CD4-positive, alpha-beta memory T cell (primary cell): ENCODE measurements at regions of chr5 and their contacts with region 1.

Region 1: GRCh38 chr5:40404613-40405012 is 275.1 kb upstream of the PTGER4 start:
- DNase-seq: peak; percentile 50 to 68 (median 58)
- H3K4me3 ChIP-seq: no peak overlapping the region
- H3K4me3 Mint-ChIP-seq: peak overlapping the region; percentile 4 to 71 (median 37)
- H3K27ac ChIP-seq: peak overlapping the region; percentile 86
- H3K27ac Mint-ChIP-seq: peak overlapping the region; percentile 85 to 100 (median 99)
- H3K4me1 ChIP-seq: peaks cover 71% of the 10 kb centered on the region
- H3K4me1 Mint-ChIP-seq: peaks cover 49 to 90% (median 72%) of the 10 kb centered on the region in 4 donors
- H3K27me3 ChIP-seq: no peaks in the 10 kb centered on the region
- H3K27me3 Mint-ChIP-seq: no peaks in the 10 kb centered on the region

Region 2: DNA sequence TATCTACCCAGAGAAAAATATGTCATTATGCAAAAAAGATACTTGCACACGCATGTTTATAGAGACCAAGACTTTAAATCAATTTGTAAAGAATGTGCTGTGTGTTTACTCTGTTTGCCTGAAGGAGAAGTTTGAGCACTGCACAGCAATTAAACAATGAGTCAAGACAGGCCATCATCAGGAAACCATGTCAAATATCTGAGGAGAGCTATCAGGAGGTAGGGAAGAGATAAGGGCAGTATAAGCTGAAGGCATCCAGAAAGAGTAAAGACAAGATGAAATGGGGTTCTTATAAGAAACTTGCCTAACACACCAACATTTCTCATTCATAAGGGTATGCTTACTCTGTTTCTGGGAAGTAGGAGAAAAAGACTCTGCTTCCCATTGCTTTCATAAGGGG is 130.7 kb before region 1 on chr5:
- CTCF ChIA-PET with region 1: no interaction called
- POLR2A ChIA-PET with region 1: no interaction called
- intact Hi-C with region 1: no loop called
- DNase-seq: no peak
- H3K4me3 ChIP-seq: no peak overlapping the region
- H3K4me3 Mint-ChIP-seq: no peak overlapping the region
- H3K27ac ChIP-seq: no peak overlapping the region
- H3K27ac Mint-ChIP-seq: no peak overlapping the region
- H3K4me1 ChIP-seq: peaks cover 28% of the 10 kb centered on the region
- H3K4me1 Mint-ChIP-seq: peaks cover 22 to 38% (median 34%) of the 10 kb centered on the region in 4 donors
- H3K27me3 ChIP-seq: no peaks in the 10 kb centered on the region
- H3K27me3 Mint-ChIP-seq: no peaks in the 10 kb centered on the region

Region 3: GRCh38 chr5:40378396-40379177 is 26.0 kb before region 1 on chr5:
- CTCF ChIA-PET with region 1: interaction called, 3 read pairs
- POLR2A ChIA-PET with region 1: interaction called, 42 read pairs
- intact Hi-C with region 1: loop called (anchors 5 kb)
- DNase-seq: peak in 4 of 5 donors; percentile 40 to 51 (median 48)
- H3K4me3 ChIP-seq: no peak overlapping the region
- H3K4me3 Mint-ChIP-seq: peak overlapping the region in 7 of 8 donors; percentile 19 to 75 (median 53)
- H3K27ac ChIP-seq: peak overlapping the region; percentile 18
- H3K27ac Mint-ChIP-seq: peak overlapping the region; percentile 77 to 96 (median 88)
- H3K4me1 ChIP-seq: peaks cover 45% of the 10 kb centered on the region
- H3K4me1 Mint-ChIP-seq: peaks cover 35 to 57% (median 43%) of the 10 kb centered on the region in 4 donors
- H3K27me3 ChIP-seq: no peaks in the 10 kb centered on the region
- H3K27me3 Mint-ChIP-seq: no peaks in the 10 kb centered on the region

Region 4: GRCh38 chr5:40386289-40386688 is 18.3 kb before region 1 on chr5:
- CTCF ChIA-PET with region 1: interaction called, 22 read pairs
- POLR2A ChIA-PET with region 1: interaction called, 121 read pairs
- intact Hi-C with region 1: no loop called
- DNase-seq: peak in 4 of 5 donors; percentile 55 to 68 (median 57)
- H3K4me3 ChIP-seq: no peak overlapping the region
- H3K4me3 Mint-ChIP-seq: peak overlapping the region in 6 of 8 donors; percentile 9 to 76 (median 51)
- H3K27ac ChIP-seq: peak overlapping the region; percentile 28
- H3K27ac Mint-ChIP-seq: peak overlapping the region; percentile 70 to 96 (median 84)
- H3K4me1 ChIP-seq: peaks cover 91% of the 10 kb centered on the region
- H3K4me1 Mint-ChIP-seq: peaks cover 75 to 93% (median 82%) of the 10 kb centered on the region in 4 donors
- H3K27me3 ChIP-seq: no peaks in the 10 kb centered on the region
- H3K27me3 Mint-ChIP-seq: no peaks in the 10 kb centered on the region

Region 5: DNA sequence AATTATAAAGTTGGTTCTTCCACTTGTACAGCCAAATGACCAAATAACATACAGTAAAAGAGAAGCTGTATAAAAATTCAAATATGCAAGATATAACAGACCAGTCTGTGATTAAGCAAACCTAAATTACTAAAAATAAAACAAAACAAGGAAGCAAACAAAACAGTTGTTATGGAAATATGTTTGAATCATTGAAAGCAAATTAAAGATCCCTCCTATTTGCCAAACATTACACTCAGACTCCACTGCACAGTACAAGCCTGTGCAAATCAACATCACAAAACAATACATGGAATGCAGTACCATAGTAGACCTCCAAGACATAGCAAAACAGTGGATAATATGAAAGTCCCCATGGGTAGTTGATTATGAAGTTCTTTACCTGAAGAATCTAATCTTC is 13.0 kb before region 1 on chr5:
- CTCF ChIA-PET with region 1: interaction called, 22 read pairs
- POLR2A ChIA-PET with region 1: interaction called, 121 read pairs
- intact Hi-C with region 1: no loop called
- DNase-seq: no peak
- H3K4me3 ChIP-seq: no peak overlapping the region
- H3K4me3 Mint-ChIP-seq: peak overlapping the region in 1 of 8 donors; percentile 6
- H3K27ac ChIP-seq: no peak overlapping the region
- H3K27ac Mint-ChIP-seq: peak overlapping the region in 5 of 7 donors; percentile 17 to 79 (median 63)
- H3K4me1 ChIP-seq: peaks cover 52% of the 10 kb centered on the region
- H3K4me1 Mint-ChIP-seq: peaks cover 42 to 58% (median 46%) of the 10 kb centered on the region in 4 donors
- H3K27me3 ChIP-seq: no peaks in the 10 kb centered on the region
- H3K27me3 Mint-ChIP-seq: no peaks in the 10 kb centered on the region